ENCODE measurements at regions of chr21 and their contacts with region 1.

Region 1: GRCh38 chr21:35048706-35049617 is at the start of gene RUNX1:
- DNase-seq: peak; percentile 91
- H3K4me3 ChIP-seq: peak within 1 kb of the TSS; percentile 13 to 35 (median 34)
- H3K27ac ChIP-seq: peak within 1 kb of the TSS; percentile 90
- H3K4me1 ChIP-seq: peaks cover 32% of the 10 kb centered on the region
- H3K27me3 ChIP-seq: no peaks in the 10 kb centered on the region
- CTCF ChIP-seq: no peak
- total RNA-seq, gene RUNX1: 126 to 133 TPM

Region 2: DNA sequence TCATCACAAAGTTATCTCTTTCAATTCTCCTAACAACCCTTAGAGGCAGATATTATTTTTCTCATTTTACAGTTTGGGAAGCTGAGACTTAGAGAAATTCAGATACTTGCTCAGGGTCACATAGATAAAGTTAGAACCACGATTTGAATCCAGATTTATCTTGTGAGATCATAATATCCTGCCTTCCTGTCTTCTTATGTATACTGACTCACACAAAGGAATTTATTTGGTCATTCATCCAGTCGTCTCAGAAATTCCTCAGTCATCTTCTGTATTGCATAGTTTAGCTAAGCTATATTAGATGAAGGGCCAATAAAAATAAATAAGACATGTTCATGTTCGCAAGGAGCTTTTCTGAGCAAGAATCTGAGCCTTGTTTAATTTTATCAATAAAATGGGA is 35.9 kb after region 1 on chr21:
- CTCF ChIA-PET with region 1: interaction called, 11 read pairs
- dilution Hi-C with region 1: no loop called
- in situ Hi-C with region 1: no loop called
- intact Hi-C with region 1: loop called (anchors 2 kb)
- DNase-seq: peak; percentile 76
- H3K4me3 ChIP-seq: no peak overlapping the region
- H3K27ac ChIP-seq: peak overlapping the region; percentile 81
- H3K4me1 ChIP-seq: peaks cover 34% of the 10 kb centered on the region
- H3K27me3 ChIP-seq: no peaks in the 10 kb centered on the region
- CTCF ChIP-seq: no peak

Region 3: GRCh38 chr21:35179990-35180540 is 131.1 kb after region 1 on chr21:
- CTCF ChIA-PET with region 1: no interaction called
- dilution Hi-C with region 1: no loop called
- in situ Hi-C with region 1: no loop called
- intact Hi-C with region 1: loop called (anchors 5 kb)
- DNase-seq: peak; percentile 87
- H3K4me3 ChIP-seq: no peak overlapping the region
- H3K27ac ChIP-seq: peak overlapping the region; percentile 92
- H3K4me1 ChIP-seq: peaks cover 28% of the 10 kb centered on the region
- H3K27me3 ChIP-seq: no peaks in the 10 kb centered on the region
- CTCF ChIP-seq: no peak

Region 4: DNA sequence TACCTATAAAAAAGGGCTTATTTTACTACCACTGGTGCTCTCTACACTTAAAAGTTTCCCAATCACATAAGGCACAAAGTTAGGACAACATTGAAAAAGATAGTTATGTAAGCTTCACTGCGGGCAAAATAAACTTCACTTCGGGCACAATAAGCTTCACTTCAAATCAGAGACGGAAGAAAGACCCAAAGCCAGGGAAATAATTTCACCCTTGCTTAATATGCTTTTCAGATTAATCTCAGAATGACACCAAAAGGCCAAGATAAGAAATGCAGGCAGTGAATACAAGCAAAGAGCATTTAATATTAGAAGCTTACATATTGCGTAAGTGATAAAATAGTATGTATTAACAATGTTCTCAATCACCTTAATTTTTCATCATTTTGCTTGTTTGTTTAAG is 567.1 kb after region 1 on chr21:
- CTCF ChIA-PET with region 1: no interaction called
- dilution Hi-C with region 1: no loop called
- in situ Hi-C with region 1: no loop called
- intact Hi-C with region 1: loop called (anchors 5 kb)
- DNase-seq: peak; percentile 40
- H3K4me3 ChIP-seq: no peak overlapping the region
- H3K27ac ChIP-seq: peak overlapping the region; percentile 25
- H3K4me1 ChIP-seq: peaks cover 54% of the 10 kb centered on the region
- H3K27me3 ChIP-seq: no peaks in the 10 kb centered on the region
- CTCF ChIP-seq: peak; percentile 50 to 59